Activated naive CD4-positive, alpha-beta T cell treated with anti-CD3 and anti-CD28 coated beads for 36 hours (primary cell): ENCODE measurements at regions of chr14 and their contacts with region 1.

Region 1: GRCh38 chr14:99382781-99383451 is 97.7 kb downstream of the SETD3 start:
- DNase-seq: no peak
- H3K4me3 Mint-ChIP-seq: no peak overlapping the region
- H3K27ac Mint-ChIP-seq: no peak overlapping the region
- H3K4me1 Mint-ChIP-seq: peaks cover 9% of the 10 kb centered on the region
- H3K27me3 Mint-ChIP-seq: peaks cover 13% of the 10 kb centered on the region

Region 2: DNA sequence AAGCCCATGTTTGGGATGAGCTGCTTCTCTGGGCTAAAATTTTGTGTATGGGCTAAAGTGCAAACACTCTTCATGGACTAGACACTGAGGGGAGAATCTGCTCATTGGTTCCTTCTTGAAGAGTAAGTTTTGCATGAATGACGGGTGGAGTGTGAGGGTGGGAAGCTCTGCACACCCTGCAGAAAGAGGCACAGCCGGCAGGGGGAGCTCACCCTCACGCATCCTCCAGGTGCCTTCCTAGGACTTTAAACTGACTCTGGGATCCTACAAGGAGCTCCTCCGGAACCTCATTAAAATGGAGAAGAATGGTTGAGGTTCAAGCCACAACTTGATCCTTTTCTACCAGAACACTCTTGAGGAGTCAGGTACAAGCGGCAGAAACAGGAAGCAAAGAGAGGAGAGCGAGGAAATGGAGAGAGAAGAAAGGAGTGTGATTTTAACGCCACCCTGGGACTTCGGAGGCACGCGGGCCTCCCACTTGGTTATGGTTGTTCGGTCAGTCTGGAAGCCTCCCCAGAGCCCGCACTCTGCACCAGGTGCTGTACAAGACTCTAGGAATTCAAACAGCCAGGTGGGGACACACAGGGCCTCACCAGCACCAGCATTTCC is 10.2 kb after region 1 on chr14:
- CTCF ChIA-PET with region 1: interaction called, 10 read pairs
- intact Hi-C with region 1: no loop called
- DNase-seq: peak; percentile 37
- H3K4me3 Mint-ChIP-seq: no peak overlapping the region
- H3K27ac Mint-ChIP-seq: no peak overlapping the region
- H3K4me1 Mint-ChIP-seq: peaks cover 7% of the 10 kb centered on the region
- H3K27me3 Mint-ChIP-seq: no peaks in the 10 kb centered on the region

Region 3: GRCh38 chr14:99427632-99428300 is 44.9 kb after region 1 on chr14:
- CTCF ChIA-PET with region 1: no interaction called
- intact Hi-C with region 1: no loop called
- DNase-seq: no peak
- H3K4me3 Mint-ChIP-seq: no peak overlapping the region
- H3K27ac Mint-ChIP-seq: no peak overlapping the region
- H3K4me1 Mint-ChIP-seq: peaks cover 9% of the 10 kb centered on the region
- H3K27me3 Mint-ChIP-seq: no peaks in the 10 kb centered on the region